Motor neuron (in vitro differentiated cells): ENCODE measurements at regions of chr17 and their contacts with region 1.

Region 1: DNA sequence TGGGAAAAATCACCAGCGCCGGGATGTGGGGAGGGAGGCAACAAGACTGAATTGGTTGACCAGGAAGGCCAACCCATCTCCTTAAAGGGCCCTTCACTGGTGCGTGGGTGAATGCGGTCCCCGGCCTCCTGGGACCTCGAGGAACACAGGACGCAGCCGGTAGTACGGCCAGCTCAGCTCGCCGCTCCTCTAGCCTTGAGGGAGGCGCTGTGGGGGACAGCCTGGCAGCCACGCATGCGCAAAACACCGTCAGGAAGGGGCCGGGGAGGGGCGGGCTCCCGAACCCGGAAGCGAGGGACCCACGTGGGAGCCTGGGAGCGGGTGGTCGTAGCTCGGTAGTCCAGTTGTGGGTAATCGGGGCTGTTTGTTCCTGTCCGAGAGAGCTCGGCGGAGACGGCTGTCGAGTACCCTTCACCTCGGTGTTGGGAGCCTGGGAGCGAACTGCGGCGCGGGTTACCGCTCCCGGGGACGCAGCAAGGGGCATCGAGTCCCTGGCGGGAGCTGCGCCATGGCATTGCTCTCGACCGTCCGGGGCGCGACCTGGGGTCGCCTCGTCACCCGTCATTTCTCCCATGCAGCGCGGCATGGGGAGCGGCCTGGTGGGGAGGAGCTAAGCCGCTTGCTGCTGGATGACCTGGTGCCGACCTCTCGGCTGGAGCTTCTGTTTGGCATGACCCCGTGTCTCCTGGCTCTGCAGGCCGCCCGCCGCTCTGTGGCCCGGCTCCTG is at the start of gene MRM1:
- ATAC-seq: peak; percentile 85 to 94 (median 92)
- H3K4me3 ChIP-seq: peak within 1 kb of the TSS; percentile 46 to 84 (median 80)
- H3K27ac ChIP-seq: peak within 1 kb of the TSS; percentile 54 to 55
- H3K4me1 ChIP-seq: peaks cover 9 to 12% of the 10 kb centered on the region in 2 donors
- total RNA-seq, gene MRM1: 2.3 to 15.1 (median 3.8) TPM

Region 2: GRCh38 chr17:37067555-37068111 is 466.2 kb after region 1 on chr17:
- in situ Hi-C with region 1: loop called in 3 of 9 experiments (anchors 25 kb)
- ATAC-seq: peak; percentile 88 to 98 (median 97)
- H3K4me3 ChIP-seq: no peak overlapping the region
- H3K27ac ChIP-seq: no peak overlapping the region
- H3K4me1 ChIP-seq: peaks cover 3 to 5% of the 10 kb centered on the region in 2 donors

Region 3: DNA sequence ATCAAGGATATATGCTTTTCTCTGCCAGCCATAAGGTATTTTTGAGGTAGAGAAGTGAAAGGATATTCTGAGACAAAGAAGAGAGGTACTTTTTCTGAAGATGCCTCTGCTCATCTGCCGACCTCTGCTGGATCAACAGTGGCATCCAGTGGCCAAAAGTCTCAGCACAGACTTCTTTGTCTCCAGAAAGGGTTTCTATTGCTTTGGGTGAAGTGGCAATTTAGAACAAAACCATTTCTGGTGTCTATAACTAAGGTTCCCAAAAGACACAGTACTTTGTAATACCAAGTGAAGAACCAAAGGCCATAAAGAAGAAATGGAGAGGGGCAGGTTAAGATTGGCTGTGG is 619.1 kb after region 1 on chr17:
- in situ Hi-C with region 1: loop called in 6 of 9 experiments (anchors 25 kb)
- ATAC-seq: peak; percentile 43 to 85 (median 65)
- H3K4me3 ChIP-seq: no peak overlapping the region
- H3K27ac ChIP-seq: no peak overlapping the region
- H3K4me1 ChIP-seq: peaks cover 13 to 21% of the 10 kb centered on the region in 2 donors

Region 4: GRCh38 chr17:37239690-37240334 is 638.3 kb after region 1 on chr17:
- in situ Hi-C with region 1: loop called in 5 of 9 experiments (anchors 25 kb)
- ATAC-seq: peak in 2 of 8 experiments; percentile 43 to 73
- H3K4me3 ChIP-seq: no peak overlapping the region
- H3K27ac ChIP-seq: no peak overlapping the region
- H3K4me1 ChIP-seq: no peaks in the 10 kb centered on the region

Region 5: DNA sequence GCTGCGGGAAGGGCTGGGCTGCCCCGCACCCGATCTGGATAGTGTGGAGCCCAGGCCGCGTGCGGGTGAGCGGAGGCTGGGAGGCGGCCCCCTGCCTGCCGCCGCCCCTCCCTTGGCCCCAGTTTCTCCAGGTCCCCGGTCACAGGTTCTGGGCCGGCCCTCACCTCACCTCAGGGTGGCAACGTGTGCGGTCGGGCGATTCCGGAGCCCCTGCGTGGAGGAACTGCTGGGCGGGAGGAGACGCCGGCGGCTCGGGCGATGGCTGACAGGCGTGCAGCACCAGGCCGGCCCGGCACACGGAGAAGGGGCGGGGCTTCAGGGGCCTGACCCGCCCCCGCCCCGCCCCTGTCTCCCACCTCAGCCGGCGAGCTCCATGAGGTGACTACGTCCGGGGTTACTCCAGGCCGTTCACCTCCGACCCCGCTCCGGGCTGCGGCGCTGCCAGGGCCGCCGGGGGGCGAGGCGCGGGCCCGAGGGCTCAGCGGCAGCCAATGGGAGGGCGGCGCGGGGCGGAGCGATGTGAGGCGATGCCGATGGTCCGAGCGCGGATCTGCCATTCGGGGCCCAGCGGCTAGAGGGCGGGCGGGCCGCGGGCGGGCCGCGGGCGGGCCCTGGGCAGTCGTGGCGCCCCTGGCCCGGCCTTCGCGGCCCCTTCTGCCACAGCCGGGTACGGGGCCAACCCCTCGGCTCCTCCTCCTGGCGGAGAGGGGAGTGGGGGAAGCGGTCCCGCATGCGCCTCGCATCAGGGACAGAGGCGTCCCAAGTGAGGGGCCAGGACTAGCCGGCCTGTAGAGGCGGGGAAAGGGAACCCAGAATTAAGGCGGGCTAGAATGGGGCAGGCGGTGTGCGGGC is 757.6 kb after region 1 on chr17:
- in situ Hi-C with region 1: loop called in 1 of 9 experiments (anchors 25 kb)
- ATAC-seq: peak; percentile 81 to 88 (median 85)
- H3K4me3 ChIP-seq: peak overlapping the region; percentile 49 to 69 (median 66)
- H3K27ac ChIP-seq: peak overlapping the region; percentile 80 to 84
- H3K4me1 ChIP-seq: peaks cover 15 to 21% of the 10 kb centered on the region in 2 donors